PC-3 (cell line): ENCODE measurements at regions of chr7 and their contacts with region 1.

Region 1: DNA sequence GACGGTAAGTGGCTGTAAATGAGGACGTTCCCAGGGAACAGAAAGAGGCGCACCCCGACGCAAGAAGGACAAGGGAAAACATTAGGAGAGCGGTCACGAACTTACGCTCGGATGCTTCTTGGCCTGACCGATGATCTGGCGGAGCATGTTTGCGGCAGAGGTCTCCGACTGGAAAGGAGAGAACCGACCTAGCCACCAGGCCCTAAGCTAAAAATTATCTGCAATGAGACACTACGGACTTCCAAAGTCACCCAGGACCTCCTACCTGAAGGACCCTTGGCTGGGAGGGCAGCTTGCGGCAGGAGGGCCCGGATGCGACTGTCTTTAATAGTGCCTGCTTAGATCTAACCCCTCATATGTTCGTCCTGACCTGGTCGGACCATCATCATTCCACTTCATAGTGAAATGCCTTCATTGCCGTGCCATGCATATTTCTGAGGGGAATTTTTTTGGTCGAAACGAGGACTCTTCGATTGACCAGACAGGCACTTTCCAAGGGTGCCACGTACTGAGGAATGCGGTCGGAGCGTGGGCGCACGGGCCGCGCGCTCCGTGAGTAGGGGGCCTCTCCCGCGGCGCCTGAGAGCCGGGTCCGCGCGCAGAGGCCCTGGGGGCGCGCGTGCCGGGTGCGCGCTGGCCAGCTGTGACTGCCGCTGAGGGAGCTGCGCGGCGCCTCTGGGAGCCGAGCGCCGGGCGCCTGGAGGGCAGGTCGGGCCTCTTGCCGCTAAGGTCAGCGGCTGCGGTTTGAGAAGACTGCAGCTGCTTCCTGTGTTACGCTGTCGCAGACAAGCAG is 33.6 kb upstream of the PHF14 start:
- DNase-seq: peak; percentile 90
- ATAC-seq: peak; percentile 89
- H3K4me3 ChIP-seq: peak overlapping the region; percentile 96
- H3K27ac ChIP-seq: peak overlapping the region; percentile 90
- H3K4me1 ChIP-seq: peaks cover 8% of the 10 kb centered on the region
- H3K27me3 ChIP-seq: no peaks in the 10 kb centered on the region
- CTCF ChIP-seq: no peak

Region 2: DNA sequence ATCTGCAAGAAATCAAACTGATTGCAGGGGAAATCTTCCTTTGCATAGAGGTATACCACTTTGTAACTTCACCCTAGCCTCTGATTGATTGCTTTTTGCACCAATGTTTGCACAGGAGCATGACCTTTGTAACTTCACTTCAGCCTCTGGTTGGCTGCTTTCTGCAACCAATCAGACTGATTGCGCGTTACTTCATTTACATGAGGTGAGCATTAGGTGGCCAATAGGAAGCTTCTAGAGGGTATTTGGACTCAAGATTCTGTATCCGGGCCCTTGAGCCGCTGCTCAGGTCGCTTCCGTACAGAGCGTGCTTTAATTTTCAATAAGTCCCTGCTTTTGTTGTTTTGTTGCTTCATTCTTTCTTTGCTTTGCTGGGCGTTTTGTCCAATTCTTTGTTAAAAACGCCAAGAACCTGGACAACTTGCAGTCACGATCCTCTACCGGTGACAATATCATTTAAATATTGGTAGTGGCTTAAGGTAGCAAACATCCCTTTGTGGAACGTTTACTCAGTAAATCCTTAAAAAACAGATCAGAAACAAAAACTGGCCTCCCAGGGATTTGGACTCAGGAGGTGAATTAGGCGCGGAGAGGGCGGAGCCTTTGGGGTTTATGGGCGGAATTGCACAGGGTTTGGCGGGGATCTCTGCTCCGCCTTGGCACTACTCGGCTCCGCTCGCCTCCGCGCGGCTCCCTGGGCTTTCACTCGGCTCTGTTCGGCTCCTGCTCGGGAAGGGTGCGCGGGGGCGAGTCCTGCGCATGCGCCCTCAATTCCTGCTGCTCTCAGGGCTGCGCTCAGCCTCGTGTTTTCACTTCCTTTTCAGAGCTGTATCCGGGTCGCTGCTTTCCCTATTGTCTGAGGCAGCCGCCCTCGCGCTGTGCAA is 33.2 kb after region 1 on chr7 and contains the start of gene PHF14:
- CTCF ChIA-PET with region 1: no interaction called
- POLR2A ChIA-PET with region 1: interaction called, 6 read pairs
- intact Hi-C with region 1: loop called (anchors 1 kb)
- DNase-seq: peak; percentile 95
- ATAC-seq: peak; percentile 97
- H3K4me3 ChIP-seq: peak within 1 kb of the TSS; percentile 86
- H3K27ac ChIP-seq: peak within 1 kb of the TSS; percentile 95
- H3K4me1 ChIP-seq: peaks cover 20% of the 10 kb centered on the region
- H3K27me3 ChIP-seq: no peaks in the 10 kb centered on the region
- CTCF ChIP-seq: no peak
- total RNA-seq, gene PHF14: 35.4 and 42.6 TPM in 2 replicates